ENCODE measurements at regions of chr11 and their contacts with region 1.

Region 1: GRCh38 chr11:112156956-112157766 is 6.7 kb downstream of the IL18 start:
- DNase-seq: peak; percentile 100
- ATAC-seq: peak; percentile 98
- H3K4me3 ChIP-seq: no peak overlapping the region
- H3K27ac ChIP-seq: peak overlapping the region; percentile 62
- H3K4me1 ChIP-seq: peaks cover 9% of the 10 kb centered on the region
- H3K27me3 ChIP-seq: no peaks in the 10 kb centered on the region
- CTCF ChIP-seq: no peak
- POLR2A ChIP-seq: no peak
- RAD21 ChIP-seq: no peak

Region 2: DNA sequence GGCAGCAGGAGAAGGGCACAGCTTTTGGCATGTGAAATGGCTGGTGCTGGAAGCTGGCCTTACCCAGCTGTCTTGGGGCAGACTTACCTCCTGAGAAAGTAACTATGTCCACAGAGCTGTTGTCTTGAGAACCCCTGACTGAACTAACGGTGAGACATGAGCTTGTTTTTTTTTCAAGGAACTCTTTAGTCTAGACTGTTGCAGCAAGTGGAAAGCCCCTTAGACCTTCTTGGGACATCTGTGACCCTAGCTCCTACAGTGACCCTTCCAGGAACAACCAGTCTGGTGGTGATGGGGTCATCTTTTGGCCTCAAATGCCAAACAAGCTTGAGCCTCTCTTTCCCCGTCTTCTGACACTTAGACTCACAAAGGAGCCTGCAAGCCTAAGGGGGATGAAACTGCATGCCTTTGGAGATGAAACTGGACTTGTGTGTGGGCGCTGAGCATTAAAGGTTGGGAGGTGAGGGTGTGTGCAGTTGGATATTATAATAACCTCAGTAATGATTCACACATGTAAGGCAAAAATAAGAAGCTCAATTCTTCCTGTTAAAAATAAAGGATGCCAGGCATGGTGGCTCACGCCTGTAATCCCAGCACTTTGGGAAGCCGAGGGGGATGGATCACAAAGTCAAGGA is 35.1 kb before region 1 on chr11:
- CTCF ChIA-PET with region 1: interaction called, 3 read pairs
- POLR2A ChIA-PET with region 1: no interaction called
- dilution Hi-C with region 1: no loop called
- in situ Hi-C with region 1: loop called (anchors 5 kb)
- intact Hi-C with region 1: loop called (anchors 5 kb)
- DNase-seq: no peak
- ATAC-seq: no peak
- H3K4me3 ChIP-seq: no peak overlapping the region
- H3K27ac ChIP-seq: no peak overlapping the region
- H3K4me1 ChIP-seq: peaks cover 5% of the 10 kb centered on the region; the same call in 1 of the 2 replicates
- H3K27me3 ChIP-seq: no peaks in the 10 kb centered on the region
- CTCF ChIP-seq: no peak
- POLR2A ChIP-seq: no peak
- RAD21 ChIP-seq: no peak

Region 3: DNA sequence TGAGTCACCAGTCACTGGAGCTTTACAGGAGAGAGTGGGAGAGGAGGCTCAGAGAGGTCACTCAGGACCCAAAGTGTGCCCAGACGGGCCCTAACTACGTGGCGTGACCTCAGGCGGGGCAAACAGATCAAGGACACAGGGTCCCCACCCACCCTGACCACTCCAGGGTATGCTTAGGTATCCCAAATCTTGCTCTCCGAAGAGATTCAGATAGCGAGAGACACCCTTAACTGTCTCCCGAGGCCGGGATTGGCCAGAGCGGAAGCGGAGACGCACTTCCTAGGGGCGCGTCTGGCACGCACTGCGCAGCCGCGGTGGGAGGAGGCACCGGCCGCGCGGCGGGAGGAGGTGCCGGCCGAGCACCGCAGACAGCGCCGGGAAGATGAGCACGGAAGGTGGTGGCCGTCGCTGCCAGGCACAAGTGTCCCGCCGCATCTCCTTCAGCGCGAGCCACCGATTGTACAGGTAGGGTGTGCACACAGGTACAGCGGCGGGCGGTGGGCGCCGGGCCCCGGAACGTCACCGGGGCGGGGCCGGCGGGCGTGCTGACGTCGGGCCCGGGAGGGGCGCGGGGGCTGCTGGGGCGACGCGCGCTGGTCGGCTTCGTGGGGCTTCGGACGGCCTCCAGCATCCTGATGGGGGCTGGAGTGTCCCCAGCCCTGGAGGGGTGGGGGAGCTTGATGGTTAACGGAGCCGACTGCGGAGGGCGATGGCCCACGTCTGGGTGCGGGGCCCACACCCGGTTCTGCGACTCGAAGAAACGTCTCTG is 69.1 kb after region 1 on chr11 and contains the start of gene PTS:
- CTCF ChIA-PET with region 1: no interaction called
- POLR2A ChIA-PET with region 1: no interaction called
- dilution Hi-C with region 1: no loop called
- in situ Hi-C with region 1: no loop called
- intact Hi-C with region 1: no loop called
- DNase-seq: peak; percentile 82
- ATAC-seq: peak; percentile 94
- H3K4me3 ChIP-seq: peak within 1 kb of the TSS; percentile 93
- H3K27ac ChIP-seq: peak within 1 kb of the TSS; percentile 98
- H3K4me1 ChIP-seq: peaks cover 16% of the 10 kb centered on the region
- H3K27me3 ChIP-seq: no peaks in the 10 kb centered on the region
- CTCF ChIP-seq: no peak
- POLR2A ChIP-seq: peak; percentile 93
- RAD21 ChIP-seq: no peak
- total RNA-seq, gene PTS: 21.0 and 63.6 TPM in 2 replicates

Measured in IMR-90 (cell line).